ENCODE measurements at regions of chr12 and their contacts with region 1.

Region 1: GRCh38 chr12:7667125-7667524 is 1.4 kb upstream of the APOBEC1 start:
- DNase-seq: peak; percentile 15
- ATAC-seq: no peak
- H3K4me3 ChIP-seq: no peak overlapping the region
- H3K27ac ChIP-seq: no peak overlapping the region
- H3K4me1 ChIP-seq: no peaks in the 10 kb centered on the region
- H3K27me3 ChIP-seq: peaks cover 8% of the 10 kb centered on the region; the same call in 1 of the 2 replicates
- CTCF ChIP-seq: peak; percentile 44

Region 2: DNA sequence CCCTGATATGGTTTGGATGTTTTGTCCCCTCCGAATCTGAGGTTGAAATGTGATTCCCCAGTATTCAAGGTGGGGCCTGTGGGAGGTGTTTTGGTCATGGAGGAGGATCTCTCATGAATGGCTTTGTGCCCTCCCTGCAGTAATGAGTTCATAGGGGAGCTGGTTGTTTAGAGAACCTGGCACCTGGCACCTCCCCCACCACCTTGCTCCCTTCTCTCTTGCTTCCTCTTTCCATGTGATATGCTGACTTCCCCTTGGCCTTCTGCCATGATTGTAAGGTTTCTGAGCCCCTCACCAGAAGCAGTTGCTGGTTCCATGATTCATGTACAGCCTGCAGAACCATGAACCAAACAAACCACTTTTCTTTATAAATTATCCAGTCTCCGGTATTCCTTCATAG is 255.8 kb before region 1 on chr12:
- CTCF ChIA-PET with region 1: no interaction called
- POLR2A ChIA-PET with region 1: no interaction called
- intact Hi-C with region 1: no loop called
- DNase-seq: no peak
- ATAC-seq: no peak
- H3K4me3 ChIP-seq: no peak overlapping the region
- H3K27ac ChIP-seq: no peak overlapping the region
- H3K4me1 ChIP-seq: no peaks in the 10 kb centered on the region
- H3K27me3 ChIP-seq: peaks cover 33% of the 10 kb centered on the region
- CTCF ChIP-seq: no peak

Region 3: DNA sequence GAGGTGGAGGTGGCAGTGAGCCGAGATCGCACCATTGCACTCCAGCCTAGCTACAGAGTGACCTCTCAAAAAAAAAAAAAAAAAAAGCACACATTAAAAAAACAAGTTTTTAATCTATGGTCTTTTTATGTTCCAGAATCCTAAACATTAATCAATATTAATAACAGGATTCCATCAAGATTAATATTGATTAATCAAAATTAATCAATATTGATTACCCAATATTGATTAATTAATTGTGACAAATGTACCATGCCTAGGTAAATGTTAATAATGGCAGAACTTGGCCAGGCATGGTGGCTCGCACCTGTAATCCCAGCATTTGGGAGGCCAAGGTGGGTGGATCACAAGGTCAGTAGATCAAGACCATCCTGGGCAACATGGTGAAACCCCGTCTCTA is 114.2 kb after region 1 on chr12:
- CTCF ChIA-PET with region 1: no interaction called
- POLR2A ChIA-PET with region 1: interaction called, 14 read pairs
- intact Hi-C with region 1: no loop called
- DNase-seq: no peak
- ATAC-seq: no peak
- H3K4me3 ChIP-seq: no peak overlapping the region
- H3K27ac ChIP-seq: no peak overlapping the region
- H3K4me1 ChIP-seq: no peaks in the 10 kb centered on the region
- H3K27me3 ChIP-seq: no peaks in the 10 kb centered on the region
- CTCF ChIP-seq: no peak

Measured in PC-3 (cell line).